PC-3 (cell line): ENCODE measurements at regions of chr10 and their contacts with region 1.

Region 1: DNA sequence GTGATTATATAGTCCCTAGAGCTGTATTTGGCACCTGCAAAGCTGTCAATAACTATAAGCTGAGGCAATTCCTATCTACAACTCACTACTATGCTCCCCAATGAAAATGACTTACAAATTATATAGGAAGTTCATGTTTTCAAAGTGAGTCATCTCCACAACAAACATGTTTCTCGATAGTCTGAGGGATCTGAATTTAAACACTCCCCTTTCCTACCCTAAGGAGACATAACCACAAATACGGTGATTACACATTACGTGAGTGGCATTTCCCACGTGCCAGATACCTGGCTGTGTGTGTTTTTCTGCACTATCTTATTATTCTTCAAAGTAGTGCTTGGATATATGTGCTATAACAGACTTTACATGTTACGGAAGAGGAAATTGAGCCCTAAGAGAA is 122.5 kb upstream of the C1QL3 start:
- DNase-seq: peak; percentile 71
- ATAC-seq: peak; percentile 99
- H3K4me3 ChIP-seq: no peak overlapping the region
- H3K27ac ChIP-seq: no peak overlapping the region
- H3K4me1 ChIP-seq: peaks cover 10% of the 10 kb centered on the region
- H3K27me3 ChIP-seq: no peaks in the 10 kb centered on the region
- CTCF ChIP-seq: no peak

Region 2: DNA sequence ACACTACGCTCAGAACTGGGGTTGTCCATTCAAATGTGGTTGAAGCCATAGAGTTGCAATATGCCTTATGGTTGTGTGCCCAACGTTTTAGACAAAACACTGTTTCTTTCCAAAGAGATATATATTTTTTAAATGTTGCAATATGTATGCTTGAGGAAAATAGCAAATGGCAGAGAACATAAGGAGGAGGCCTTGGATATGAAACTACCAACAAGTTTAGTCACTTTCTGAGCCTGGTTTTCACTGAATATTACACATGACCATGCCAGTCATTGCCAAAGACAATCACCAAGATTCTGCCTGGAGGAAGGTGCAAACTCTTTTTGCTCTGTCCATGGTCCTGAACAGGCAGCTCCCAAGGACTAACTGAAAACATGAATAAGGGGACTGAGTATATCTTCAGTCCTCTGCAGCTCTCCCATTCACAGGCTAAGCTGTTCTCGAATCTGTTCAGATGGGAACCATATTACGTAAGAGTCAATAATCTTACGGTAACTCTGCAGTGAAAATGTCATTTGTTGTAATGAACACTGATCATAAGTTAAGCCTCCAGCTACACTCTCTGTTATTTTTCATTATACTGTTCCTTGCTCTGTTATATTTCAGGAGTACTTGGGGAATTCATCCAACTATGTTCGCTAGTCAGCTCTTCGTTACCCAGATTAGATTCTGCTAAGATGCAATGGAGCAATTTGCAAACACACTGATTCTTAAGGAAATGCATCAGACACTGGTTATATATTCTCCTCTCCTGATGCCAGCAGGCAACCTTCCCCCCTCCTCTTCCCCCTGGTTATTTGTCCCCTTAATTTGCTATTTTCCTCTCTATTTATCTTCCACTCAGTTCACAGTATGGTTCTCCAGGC is 31.8 kb before region 1 on chr10:
- CTCF ChIA-PET with region 1: no interaction called
- POLR2A ChIA-PET with region 1: no interaction called
- intact Hi-C with region 1: no loop called
- DNase-seq: peak; percentile 16
- ATAC-seq: no peak
- H3K4me3 ChIP-seq: no peak overlapping the region
- H3K27ac ChIP-seq: no peak overlapping the region
- H3K4me1 ChIP-seq: no peaks in the 10 kb centered on the region
- H3K27me3 ChIP-seq: no peaks in the 10 kb centered on the region
- CTCF ChIP-seq: no peak

Region 3: DNA sequence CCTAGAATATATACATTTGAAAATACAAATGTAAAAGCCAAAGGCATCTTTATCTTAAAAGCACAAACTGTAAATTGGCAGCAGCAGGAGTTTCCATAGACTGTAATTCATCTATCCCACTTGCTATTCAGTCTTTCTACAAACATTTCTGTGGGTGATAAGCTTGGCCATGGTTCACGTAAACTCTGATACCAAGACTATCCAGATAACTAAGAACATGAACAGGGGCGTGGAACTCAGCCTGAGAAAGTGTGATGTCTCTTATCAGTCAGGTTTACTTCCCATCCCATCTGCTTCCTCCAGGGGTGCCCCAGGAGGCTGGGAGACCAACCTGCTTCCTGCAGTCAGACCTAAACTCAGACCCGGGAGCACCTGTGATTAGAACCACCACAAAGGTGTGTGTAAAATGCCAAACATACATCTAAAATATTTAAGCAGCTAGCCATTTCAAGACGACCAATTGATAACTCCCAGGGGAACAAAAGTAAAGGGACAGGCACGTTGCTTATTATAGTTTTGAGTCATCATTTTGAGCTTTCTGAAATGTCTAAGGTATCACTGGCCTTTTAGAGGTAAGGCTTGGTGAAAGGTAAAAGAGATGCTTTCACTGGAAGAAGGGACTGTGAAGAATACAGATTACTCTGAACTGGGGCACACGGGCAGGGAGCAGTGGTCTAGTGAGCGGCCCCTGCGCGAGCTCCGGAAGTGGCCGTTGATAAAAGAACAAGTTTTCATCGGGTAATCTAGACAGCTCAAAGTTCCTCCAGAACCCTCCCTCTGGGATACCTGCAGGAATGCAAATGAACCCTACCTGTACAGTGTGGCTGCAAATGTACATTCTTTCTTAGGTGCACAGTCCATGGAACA is 121.6 kb after region 1 on chr10:
- CTCF ChIA-PET with region 1: no interaction called
- POLR2A ChIA-PET with region 1: interaction called, 10 read pairs
- intact Hi-C with region 1: no loop called
- DNase-seq: no peak
- ATAC-seq: no peak
- H3K4me3 ChIP-seq: no peak overlapping the region
- H3K27ac ChIP-seq: no peak overlapping the region
- H3K4me1 ChIP-seq: no peaks in the 10 kb centered on the region
- H3K27me3 ChIP-seq: no peaks in the 10 kb centered on the region
- CTCF ChIP-seq: no peak